ENCODE measurements at regions of chr4 and their contacts with region 1.

Region 1: DNA sequence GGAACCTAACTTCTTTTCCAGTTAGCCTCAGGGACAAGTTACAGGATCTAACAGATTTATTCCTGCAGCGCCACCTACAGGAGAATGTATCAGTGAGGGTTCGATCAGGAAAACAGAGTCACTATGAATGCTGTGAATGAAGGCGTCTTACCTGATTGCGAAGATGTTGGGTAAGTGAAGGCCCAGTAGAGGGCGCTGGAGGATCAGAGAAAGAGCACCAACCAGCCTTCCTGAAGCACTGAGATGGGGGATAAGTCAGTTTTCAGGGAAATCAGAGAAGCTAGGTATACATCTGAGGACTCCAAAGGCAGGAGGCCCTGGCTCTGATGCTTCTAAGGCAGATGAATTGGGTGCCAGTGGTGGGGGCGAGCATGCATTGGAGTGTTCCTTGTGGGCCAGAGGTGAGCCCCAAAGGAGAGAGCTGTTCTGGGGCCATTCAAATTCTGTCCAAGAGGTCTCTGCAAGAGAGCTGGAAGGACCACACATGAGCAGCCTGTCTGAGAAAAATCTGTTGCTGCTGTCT is 169.9 kb upstream of the AADAT start:
- DNase-seq: peak; percentile 74 to 83
- ATAC-seq: peak; percentile 98

Region 2: GRCh38 chr4:170122252-170122651 is 137.4 kb before region 1 on chr4:
- intact Hi-C with region 1: no loop called
- DNase-seq: no peak
- ATAC-seq: no peak

Region 3: DNA sequence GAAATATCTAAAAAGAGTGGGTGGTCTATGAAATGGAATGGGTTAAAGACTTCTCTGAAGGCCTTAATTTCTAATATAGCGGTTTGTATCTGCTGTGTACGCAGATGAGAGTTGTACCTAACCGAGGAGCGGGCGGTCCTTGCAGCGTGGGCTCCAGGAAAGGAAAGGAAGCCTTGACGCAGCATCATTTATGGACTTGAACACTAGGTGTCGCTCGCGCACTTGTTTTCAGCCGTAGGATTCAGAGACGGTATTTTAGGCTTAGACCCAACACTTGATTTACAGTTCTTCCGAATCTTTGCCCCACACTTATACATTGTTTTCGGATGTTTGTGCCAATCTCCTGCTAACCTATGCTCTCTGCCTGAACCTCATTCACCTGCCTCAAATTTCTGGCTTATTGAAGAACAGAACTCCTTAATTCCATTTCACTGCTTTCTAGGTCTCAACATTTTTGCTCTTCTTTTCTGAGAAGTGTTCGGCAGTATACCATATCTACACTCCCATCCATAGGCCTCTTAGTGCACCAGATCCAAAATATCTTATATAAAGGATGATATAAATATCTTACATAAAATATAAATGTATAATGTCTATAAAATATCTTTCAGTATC is 121.0 kb before region 1 on chr4:
- intact Hi-C with region 1: loop called in 1 of 2 experiments (anchors 5 kb)
- DNase-seq: peak; percentile 35 to 81
- ATAC-seq: peak; percentile 68

Region 4: GRCh38 chr4:170420254-170420693 is 160.6 kb after region 1 on chr4:
- intact Hi-C with region 1: no loop called
- DNase-seq: no peak
- ATAC-seq: no peak

Region 5: GRCh38 chr4:170736710-170737109 is 477.0 kb after region 1 on chr4:
- intact Hi-C with region 1: no loop called
- DNase-seq: no peak
- ATAC-seq: no peak

Measured in left colon (tissue), 2 donors.